ENCODE measurements at regions of chr6 and their contacts with region 1.

Region 1: DNA sequence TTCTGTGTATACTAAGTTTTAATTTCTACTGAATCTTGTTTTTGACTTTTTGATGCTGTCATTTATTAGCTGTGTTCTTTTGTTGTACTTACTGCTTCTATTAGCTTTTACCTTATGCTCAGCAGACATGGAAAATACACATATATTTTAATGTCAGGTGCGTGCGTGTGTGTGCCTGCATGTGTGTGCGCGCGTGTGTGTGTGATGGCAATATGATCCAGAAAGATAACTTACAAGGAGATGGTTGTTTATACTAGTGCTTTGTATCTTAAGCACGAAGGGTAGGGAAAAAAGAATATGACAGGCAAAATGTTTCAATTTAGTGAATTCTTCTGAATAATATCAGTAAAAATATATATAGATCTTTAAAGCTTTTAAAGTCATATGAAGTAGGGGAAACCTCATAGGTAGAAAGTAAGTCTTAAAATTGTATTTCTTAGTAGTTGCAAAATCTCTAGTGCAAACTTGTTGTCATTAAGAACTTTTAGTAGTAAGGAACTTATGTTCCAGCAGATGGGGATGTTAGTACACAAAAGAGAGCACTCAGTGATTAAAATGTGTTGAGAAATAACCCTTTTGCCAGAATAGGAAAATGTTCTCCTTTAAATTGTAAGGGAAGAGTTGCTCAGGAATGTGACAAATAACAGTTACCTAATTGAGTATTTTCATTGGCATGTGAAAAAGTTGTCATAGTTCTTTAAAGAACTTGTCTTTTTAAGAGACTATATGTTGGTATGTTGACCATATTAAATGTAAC is 13.2 kb downstream of the QKI start:
- DNase-seq: peak in 1 of 2 donors; percentile 61
- ATAC-seq: peak in 2 of 3 donors; percentile 48 to 53
- H3K4me3 ChIP-seq: no peak overlapping the region
- H3K4me3 Mint-ChIP-seq: no peak overlapping the region
- H3K27ac ChIP-seq: no peak overlapping the region
- H3K27ac Mint-ChIP-seq: no peak overlapping the region
- H3K4me1 ChIP-seq: peaks cover 6% of the 10 kb centered on the region
- H3K4me1 Mint-ChIP-seq: peaks cover 40 to 70% of the 10 kb centered on the region in 2 donors
- H3K27me3 ChIP-seq: no peaks in the 10 kb centered on the region
- H3K27me3 Mint-ChIP-seq: no peaks in the 10 kb centered on the region
- CTCF ChIP-seq: peak; percentile 53

Region 2: GRCh38 chr6:163324411-163325389 is 103.0 kb before region 1 on chr6:
- intact Hi-C with region 1: no loop called
- DNase-seq: no peak
- ATAC-seq: no peak
- H3K4me3 ChIP-seq: no peak overlapping the region
- H3K4me3 Mint-ChIP-seq: no peak overlapping the region
- H3K27ac ChIP-seq: no peak overlapping the region
- H3K27ac Mint-ChIP-seq: no peak overlapping the region
- H3K4me1 ChIP-seq: no peaks in the 10 kb centered on the region
- H3K4me1 Mint-ChIP-seq: peaks cover 0 to 10% of the 10 kb centered on the region in 2 donors
- H3K27me3 ChIP-seq: no peaks in the 10 kb centered on the region
- H3K27me3 Mint-ChIP-seq: peaks cover 13 to 17% of the 10 kb centered on the region in 2 donors
- CTCF ChIP-seq: no peak

Region 3: DNA sequence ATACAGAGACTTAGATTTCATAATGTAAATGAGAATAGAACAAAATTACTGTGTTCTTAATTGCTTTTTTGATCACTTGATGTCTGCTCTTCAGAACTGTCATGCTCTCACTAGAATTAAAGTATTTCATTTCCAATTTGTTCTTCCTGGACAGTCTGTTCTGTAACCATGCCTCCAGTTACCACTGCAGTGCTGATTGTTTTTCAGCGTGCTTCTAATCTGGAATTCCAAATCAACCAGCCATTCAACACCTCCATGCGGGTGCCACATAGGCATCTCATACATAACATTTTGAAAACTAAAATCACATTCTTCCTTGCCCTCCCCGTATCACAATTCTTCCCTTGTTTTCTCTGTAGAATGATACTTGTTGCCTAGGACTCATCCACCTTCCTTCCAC is 119.6 kb after region 1 on chr6:
- intact Hi-C with region 1: loop called (anchors 1 kb)
- DNase-seq: no peak
- ATAC-seq: no peak
- H3K4me3 ChIP-seq: no peak overlapping the region
- H3K4me3 Mint-ChIP-seq: no peak overlapping the region
- H3K27ac ChIP-seq: no peak overlapping the region
- H3K27ac Mint-ChIP-seq: peak overlapping the region; percentile 28 to 52
- H3K4me1 ChIP-seq: peaks cover 2% of the 10 kb centered on the region
- H3K4me1 Mint-ChIP-seq: peaks cover 30 to 42% of the 10 kb centered on the region in 2 donors
- H3K27me3 ChIP-seq: no peaks in the 10 kb centered on the region
- H3K27me3 Mint-ChIP-seq: no peaks in the 10 kb centered on the region
- CTCF ChIP-seq: no peak

Region 4: DNA sequence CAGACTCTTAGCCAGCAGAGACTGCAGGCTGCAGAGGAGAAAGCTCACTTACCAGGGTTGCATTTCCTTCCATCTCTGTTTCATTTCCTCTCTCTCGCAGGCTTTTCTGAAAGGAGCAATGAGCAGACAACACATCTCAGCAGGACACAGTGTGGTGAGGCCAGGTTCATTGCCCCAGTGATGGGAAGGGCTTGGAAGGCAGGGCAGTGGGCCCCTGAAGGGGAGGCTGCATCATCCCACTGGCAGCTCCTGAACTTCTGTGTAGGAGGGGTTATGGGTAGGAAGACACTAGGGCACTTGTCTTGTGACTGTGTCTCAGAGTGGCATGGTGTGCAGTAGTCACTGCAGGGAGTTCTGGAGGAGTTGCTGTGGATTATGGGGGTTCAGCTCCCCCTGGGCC is 233.6 kb after region 1 on chr6:
- intact Hi-C with region 1: no loop called
- DNase-seq: no peak
- ATAC-seq: peak in 2 of 3 donors; percentile 25 to 39
- H3K4me3 ChIP-seq: no peak overlapping the region
- H3K4me3 Mint-ChIP-seq: no peak overlapping the region
- H3K27ac ChIP-seq: no peak overlapping the region
- H3K27ac Mint-ChIP-seq: peak overlapping the region in 1 of 2 donors; percentile 11
- H3K4me1 ChIP-seq: peaks cover 13% of the 10 kb centered on the region
- H3K4me1 Mint-ChIP-seq: peaks cover 10 to 11% of the 10 kb centered on the region in 2 donors
- H3K27me3 ChIP-seq: peaks cover 2% of the 10 kb centered on the region
- H3K27me3 Mint-ChIP-seq: peaks cover 11 to 43% of the 10 kb centered on the region in 2 donors
- CTCF ChIP-seq: no peak